Activated CD8-positive, alpha-beta T cell treated with anti-CD3 and anti-CD28 coated beads, Interleukin-2, amount 10 ng/mL, durations not matched to agents 7 days and 5 days (primary cell): ENCODE measurements at regions of chr3 and their contacts with region 1.

Region 1: DNA sequence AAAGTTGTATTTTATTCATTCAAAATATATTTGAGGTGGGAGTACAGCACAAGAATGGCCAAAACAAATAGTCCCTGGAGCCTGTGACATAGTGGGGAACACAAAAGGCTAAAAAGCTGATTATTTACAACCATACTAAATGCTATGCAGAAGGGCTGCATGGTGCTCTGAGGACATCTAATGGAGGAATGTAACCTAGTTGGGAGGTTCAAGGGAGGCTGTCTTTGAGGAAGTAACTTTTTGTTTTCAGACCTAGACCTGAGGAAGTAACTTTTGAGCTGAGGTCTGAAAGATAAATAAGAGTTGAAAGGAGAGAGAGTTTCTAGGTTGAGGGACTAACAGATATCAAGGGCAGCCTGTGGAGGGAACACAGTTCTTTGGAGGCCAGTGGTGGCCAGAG is 34.8 kb upstream of the RASA2 start:
- DNase-seq: peak; percentile 76
- ATAC-seq: peak; percentile 90
- H3K4me3 Mint-ChIP-seq: no peak overlapping the region
- H3K27ac Mint-ChIP-seq: no peak overlapping the region
- H3K4me1 Mint-ChIP-seq: peaks cover 8% of the 10 kb centered on the region
- H3K27me3 Mint-ChIP-seq: no peaks in the 10 kb centered on the region

Region 2: DNA sequence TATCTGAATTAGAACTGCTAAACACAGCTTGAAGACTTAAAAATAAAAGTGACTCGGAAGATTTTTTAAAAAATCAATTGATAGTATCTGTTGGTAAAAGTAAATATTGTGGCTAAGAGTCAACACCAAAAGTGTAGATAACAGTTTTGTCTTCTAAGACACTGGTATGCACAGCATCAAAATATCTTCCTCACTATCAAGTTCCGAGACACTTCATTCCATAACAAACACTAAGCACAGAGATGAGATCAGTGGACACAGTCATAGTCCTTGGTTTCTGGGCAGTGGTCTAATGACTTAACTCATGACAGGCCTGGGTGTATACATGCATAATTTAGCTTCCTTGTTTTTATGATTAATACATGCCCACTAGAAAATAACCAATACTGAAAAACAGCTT is 157.2 kb before region 1 on chr3:
- CTCF ChIA-PET with region 1: interaction called, 267 read pairs
- POLR2A ChIA-PET with region 1: no interaction called
- DNase-seq: no peak
- ATAC-seq: no peak
- H3K4me3 Mint-ChIP-seq: peak overlapping the region; percentile 28
- H3K27ac Mint-ChIP-seq: peak overlapping the region; percentile 37
- H3K4me1 Mint-ChIP-seq: peaks cover 15% of the 10 kb centered on the region
- H3K27me3 Mint-ChIP-seq: peaks cover 3% of the 10 kb centered on the region

Region 3: DNA sequence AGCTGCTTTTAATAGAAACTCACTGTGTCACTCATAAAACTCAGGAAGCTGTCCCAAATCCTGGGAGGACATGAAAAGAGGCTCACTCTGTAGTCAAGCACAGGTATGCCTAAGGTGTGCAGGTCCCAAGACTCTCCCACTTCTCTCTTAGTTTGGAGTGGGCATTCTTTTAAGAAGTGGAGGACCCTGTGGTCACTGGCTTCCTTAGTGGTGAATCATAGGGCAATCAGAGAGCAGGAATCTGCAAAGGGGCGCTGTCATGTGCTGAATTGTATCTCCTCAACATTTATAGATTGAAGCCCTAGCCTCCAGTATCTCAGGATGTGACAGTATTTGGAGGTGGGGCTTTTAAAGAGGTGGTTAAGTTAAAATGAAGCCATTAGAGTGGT is 130.9 kb before region 1 on chr3:
- CTCF ChIA-PET with region 1: interaction called, 223 read pairs
- POLR2A ChIA-PET with region 1: no interaction called
- DNase-seq: no peak
- ATAC-seq: peak; percentile 39
- H3K4me3 Mint-ChIP-seq: no peak overlapping the region
- H3K27ac Mint-ChIP-seq: peak overlapping the region; percentile 71
- H3K4me1 Mint-ChIP-seq: peaks cover 16% of the 10 kb centered on the region
- H3K27me3 Mint-ChIP-seq: no peaks in the 10 kb centered on the region

Region 4: GRCh38 chr3:141370065-141370533 is 81.9 kb before region 1 on chr3:
- CTCF ChIA-PET with region 1: interaction called, 30 read pairs
- POLR2A ChIA-PET with region 1: no interaction called
- DNase-seq: peak; percentile 77
- ATAC-seq: peak; percentile 97
- H3K4me3 Mint-ChIP-seq: no peak overlapping the region
- H3K27ac Mint-ChIP-seq: no peak overlapping the region
- H3K4me1 Mint-ChIP-seq: peaks cover 22% of the 10 kb centered on the region
- H3K27me3 Mint-ChIP-seq: peaks cover 4% of the 10 kb centered on the region

Region 5: GRCh38 chr3:141426404-141427034 is 25.5 kb before region 1 on chr3:
- CTCF ChIA-PET with region 1: interaction called, 16 read pairs
- POLR2A ChIA-PET with region 1: no interaction called
- DNase-seq: no peak
- ATAC-seq: no peak
- H3K4me3 Mint-ChIP-seq: no peak overlapping the region
- H3K27ac Mint-ChIP-seq: no peak overlapping the region
- H3K4me1 Mint-ChIP-seq: peaks cover 6% of the 10 kb centered on the region
- H3K27me3 Mint-ChIP-seq: no peaks in the 10 kb centered on the region

Region 6: GRCh38 chr3:141553055-141553454 is 101.0 kb after region 1 on chr3:
- CTCF ChIA-PET with region 1: interaction called, 30 read pairs
- POLR2A ChIA-PET with region 1: no interaction called
- DNase-seq: peak; percentile 60
- ATAC-seq: peak; percentile 86
- H3K4me3 Mint-ChIP-seq: peak overlapping the region; percentile 55
- H3K27ac Mint-ChIP-seq: peak overlapping the region; percentile 89
- H3K4me1 Mint-ChIP-seq: peaks cover 49% of the 10 kb centered on the region
- H3K27me3 Mint-ChIP-seq: no peaks in the 10 kb centered on the region